ENCODE measurements at regions of chr1 and their contacts with region 1.

Region 1: DNA sequence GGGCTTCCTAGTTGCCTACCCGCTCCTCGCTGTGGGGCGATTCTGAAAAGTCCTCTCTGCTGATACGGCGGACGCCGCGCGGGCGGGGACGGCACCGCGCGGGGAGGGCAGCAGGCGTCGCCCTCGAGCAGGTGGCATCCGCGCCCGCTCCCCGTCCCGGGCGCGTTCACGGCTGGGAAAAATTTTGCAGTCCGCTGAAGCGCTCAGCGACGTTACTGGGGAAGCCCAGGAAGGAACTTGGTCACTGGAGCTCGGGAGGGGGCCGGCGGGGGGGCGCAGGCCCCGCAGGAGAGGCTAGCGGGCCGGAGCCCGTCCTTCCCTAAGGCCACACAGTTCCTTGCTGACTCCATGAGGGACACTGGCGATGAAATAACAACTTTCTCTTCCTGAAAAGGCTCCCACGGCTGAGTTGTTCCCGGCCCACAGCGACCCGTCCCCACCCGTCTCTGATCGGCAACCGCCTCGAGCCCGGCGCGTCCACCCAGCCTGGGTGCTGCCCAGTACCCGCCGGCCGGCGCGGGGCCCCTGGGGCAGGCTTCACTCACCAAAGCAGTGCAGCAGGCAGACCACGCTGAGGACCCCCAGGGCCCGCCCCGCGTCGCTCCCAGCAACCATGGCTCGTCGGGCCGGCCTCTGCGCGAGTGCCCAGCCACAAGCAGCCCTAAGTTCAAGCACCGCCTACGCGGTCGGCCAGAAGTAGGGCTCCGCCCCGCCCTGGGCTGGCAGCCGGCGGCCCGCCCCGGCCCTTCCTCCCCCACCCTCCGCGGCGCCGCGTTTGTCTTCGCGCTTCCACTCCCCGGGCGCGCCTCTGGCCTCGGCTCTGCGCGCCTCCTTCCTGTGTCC is at the start of gene CD58:
- DNase-seq: peak; percentile 86
- H3K4me3 ChIP-seq: peak within 1 kb of the TSS; percentile 81 to 89 (median 88)
- H3K27ac ChIP-seq: peak within 1 kb of the TSS; percentile 83
- H3K4me1 ChIP-seq: peaks cover 20% of the 10 kb centered on the region
- H3K27me3 ChIP-seq: no peaks in the 10 kb centered on the region
- CTCF ChIP-seq: peak; percentile 47 to 67
- total RNA-seq, gene CD58: 22.5 to 43.2 TPM

Region 2: DNA sequence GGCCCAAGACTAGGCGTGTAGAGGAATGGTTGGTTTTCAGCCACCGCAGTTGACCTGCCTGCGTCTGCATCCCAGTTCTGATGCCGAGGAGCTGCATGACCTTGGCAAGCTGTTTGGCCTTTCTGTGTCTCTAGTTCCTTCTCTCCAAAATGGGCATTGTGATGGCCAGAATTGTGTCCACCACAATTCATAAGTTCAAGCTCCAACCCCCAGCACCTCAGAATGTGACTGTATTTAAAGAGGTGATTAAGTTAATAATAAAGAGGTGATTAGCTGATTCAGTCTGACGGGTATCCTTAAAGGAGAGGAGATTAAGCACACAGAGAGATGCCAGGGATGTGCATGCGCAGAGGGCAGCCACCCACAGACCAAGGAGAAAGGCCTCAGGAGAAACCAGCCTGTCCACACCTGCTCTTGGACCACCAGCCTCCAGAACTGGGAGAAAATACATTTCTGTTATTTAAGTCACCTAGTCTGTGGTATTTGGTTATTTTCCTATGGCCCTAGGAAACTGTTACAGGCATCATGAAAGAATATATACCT is 430.9 kb before region 1 on chr1:
- CTCF ChIA-PET with region 1: no interaction called
- dilution Hi-C with region 1: no loop called
- in situ Hi-C with region 1: no loop called
- intact Hi-C with region 1: loop called (anchors 1 kb)
- DNase-seq: no peak
- H3K4me3 ChIP-seq: no peak overlapping the region
- H3K27ac ChIP-seq: no peak overlapping the region
- H3K4me1 ChIP-seq: no peaks in the 10 kb centered on the region
- H3K27me3 ChIP-seq: no peaks in the 10 kb centered on the region
- CTCF ChIP-seq: no peak

Region 3: GRCh38 chr1:116538544-116538943 is 32.0 kb before region 1 on chr1:
- CTCF ChIA-PET with region 1: no interaction called
- dilution Hi-C with region 1: no loop called
- in situ Hi-C with region 1: no loop called
- intact Hi-C with region 1: loop called (anchors 1 kb)
- DNase-seq: peak; percentile 86
- H3K4me3 ChIP-seq: no peak overlapping the region
- H3K27ac ChIP-seq: peak overlapping the region; percentile 69
- H3K4me1 ChIP-seq: peaks cover 51% of the 10 kb centered on the region
- H3K27me3 ChIP-seq: no peaks in the 10 kb centered on the region
- CTCF ChIP-seq: no peak

Region 4: GRCh38 chr1:116724765-116725375 is 154.3 kb after region 1 on chr1:
- CTCF ChIA-PET with region 1: no interaction called
- dilution Hi-C with region 1: no loop called
- in situ Hi-C with region 1: no loop called
- intact Hi-C with region 1: loop called (anchors 2 kb)
- DNase-seq: peak; percentile 52
- H3K4me3 ChIP-seq: no peak overlapping the region
- H3K27ac ChIP-seq: no peak overlapping the region
- H3K4me1 ChIP-seq: peaks cover 39% of the 10 kb centered on the region
- H3K27me3 ChIP-seq: no peaks in the 10 kb centered on the region
- CTCF ChIP-seq: peak; percentile 68 to 89

Region 5: GRCh38 chr1:116817582-116818064 is 247.0 kb after region 1 on chr1:
- CTCF ChIA-PET with region 1: no interaction called
- dilution Hi-C with region 1: no loop called
- in situ Hi-C with region 1: loop called in 1 of 2 experiments (anchors 25 kb)
- intact Hi-C with region 1: loop called (anchors 1 kb)
- DNase-seq: peak; percentile 63
- H3K4me3 ChIP-seq: no peak overlapping the region
- H3K27ac ChIP-seq: no peak overlapping the region
- H3K4me1 ChIP-seq: peaks cover 12% of the 10 kb centered on the region
- H3K27me3 ChIP-seq: no peaks in the 10 kb centered on the region
- CTCF ChIP-seq: peak; percentile 78 to 89

Region 6: DNA sequence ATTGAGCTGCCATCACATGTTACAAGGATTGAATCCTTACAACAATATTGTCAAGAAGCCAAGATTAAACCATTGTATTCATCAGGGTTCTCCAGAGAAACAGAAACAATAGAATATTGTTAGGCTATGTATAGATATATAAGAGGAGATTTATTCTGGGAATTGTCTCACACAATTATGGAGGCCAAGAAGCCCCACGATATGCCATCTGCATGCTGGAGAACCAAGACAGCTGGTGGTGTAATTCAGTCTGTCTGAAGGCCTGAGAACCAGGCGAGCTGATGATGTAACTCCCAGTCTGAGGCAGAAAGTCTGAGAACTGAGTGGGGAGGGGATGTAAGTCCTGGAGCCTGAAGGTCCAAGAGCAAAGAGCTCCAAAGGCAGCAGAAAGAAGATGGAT is 475.1 kb after region 1 on chr1:
- CTCF ChIA-PET with region 1: no interaction called
- dilution Hi-C with region 1: no loop called
- in situ Hi-C with region 1: loop called in 1 of 2 experiments (anchors 25 kb)
- intact Hi-C with region 1: no loop called
- DNase-seq: no peak
- H3K4me3 ChIP-seq: no peak overlapping the region
- H3K27ac ChIP-seq: no peak overlapping the region
- H3K4me1 ChIP-seq: no peaks in the 10 kb centered on the region
- H3K27me3 ChIP-seq: no peaks in the 10 kb centered on the region
- CTCF ChIP-seq: no peak

Region 7: GRCh38 chr1:117128323-117129079 is 557.9 kb after region 1 on chr1:
- CTCF ChIA-PET with region 1: no interaction called
- dilution Hi-C with region 1: no loop called
- in situ Hi-C with region 1: no loop called
- intact Hi-C with region 1: loop called (anchors 5 kb)
- DNase-seq: peak; percentile 16
- H3K4me3 ChIP-seq: no peak overlapping the region
- H3K27ac ChIP-seq: no peak overlapping the region
- H3K4me1 ChIP-seq: no peaks in the 10 kb centered on the region
- H3K27me3 ChIP-seq: no peaks in the 10 kb centered on the region
- CTCF ChIP-seq: peak; percentile 53 to 54